ENCODE measurements at regions of chr1 and their contacts with region 1.

Region 1: DNA sequence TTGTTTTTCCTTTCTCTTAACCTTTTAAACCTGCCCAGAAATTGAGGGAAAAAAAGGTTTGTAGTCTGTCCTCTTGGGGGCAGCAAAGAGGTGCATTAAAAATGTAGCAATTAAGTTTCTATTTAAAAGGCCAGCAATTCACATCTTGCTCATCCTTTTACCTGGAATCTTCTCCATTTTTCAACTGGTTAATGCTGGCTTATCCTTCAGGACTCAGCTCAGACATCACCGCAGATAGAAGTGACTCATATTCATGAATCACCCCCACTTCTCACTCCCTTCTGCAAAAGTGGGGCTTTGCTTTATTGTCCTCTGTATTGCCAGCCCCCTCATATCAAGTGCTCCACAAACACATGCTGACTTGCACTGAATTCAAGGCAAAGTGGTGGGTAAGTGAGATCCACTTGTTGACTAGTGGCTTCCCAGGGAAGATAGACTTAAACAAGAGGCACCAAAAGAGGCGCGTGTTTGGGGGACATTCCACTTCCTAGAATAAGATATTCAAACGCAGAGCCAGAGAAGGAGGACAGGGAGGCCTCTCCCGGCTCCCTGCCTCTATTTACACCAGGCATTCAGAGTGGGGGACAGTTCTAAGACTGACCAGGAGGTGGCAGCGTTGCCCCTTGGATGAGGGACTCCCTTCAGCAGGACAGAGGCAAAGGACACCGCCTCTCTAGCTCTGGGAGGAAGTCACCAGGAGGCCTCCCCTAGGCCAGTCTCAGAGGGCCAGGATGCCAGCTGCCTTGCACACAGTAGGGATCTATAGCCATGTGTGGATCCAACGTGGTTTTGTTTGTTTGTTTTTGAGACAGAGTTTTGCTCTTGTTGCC is 23.2 kb upstream of the ZNF648 start:
- DNase-seq: no peak
- H3K4me3 ChIP-seq: no peak overlapping the region
- H3K27me3 ChIP-seq: no peaks in the 10 kb centered on the region
- CTCF ChIP-seq: peak; percentile 79

Region 2: GRCh38 chr1:181479137-181479745 is 605.5 kb before region 1 on chr1:
- CTCF ChIA-PET with region 1: interaction called, 58 read pairs
- POLR2A ChIA-PET with region 1: no interaction called
- DNase-seq: peak; percentile 4
- H3K4me3 ChIP-seq: no peak overlapping the region
- H3K27me3 ChIP-seq: peaks cover 26% of the 10 kb centered on the region
- CTCF ChIP-seq: peak; percentile 78

Region 3: GRCh38 chr1:182069028-182069466 is 15.7 kb before region 1 on chr1:
- CTCF ChIA-PET with region 1: interaction called, 36 read pairs
- POLR2A ChIA-PET with region 1: no interaction called
- DNase-seq: no peak
- H3K4me3 ChIP-seq: no peak overlapping the region
- H3K27me3 ChIP-seq: no peaks in the 10 kb centered on the region
- CTCF ChIP-seq: peak; percentile 84

Region 4: DNA sequence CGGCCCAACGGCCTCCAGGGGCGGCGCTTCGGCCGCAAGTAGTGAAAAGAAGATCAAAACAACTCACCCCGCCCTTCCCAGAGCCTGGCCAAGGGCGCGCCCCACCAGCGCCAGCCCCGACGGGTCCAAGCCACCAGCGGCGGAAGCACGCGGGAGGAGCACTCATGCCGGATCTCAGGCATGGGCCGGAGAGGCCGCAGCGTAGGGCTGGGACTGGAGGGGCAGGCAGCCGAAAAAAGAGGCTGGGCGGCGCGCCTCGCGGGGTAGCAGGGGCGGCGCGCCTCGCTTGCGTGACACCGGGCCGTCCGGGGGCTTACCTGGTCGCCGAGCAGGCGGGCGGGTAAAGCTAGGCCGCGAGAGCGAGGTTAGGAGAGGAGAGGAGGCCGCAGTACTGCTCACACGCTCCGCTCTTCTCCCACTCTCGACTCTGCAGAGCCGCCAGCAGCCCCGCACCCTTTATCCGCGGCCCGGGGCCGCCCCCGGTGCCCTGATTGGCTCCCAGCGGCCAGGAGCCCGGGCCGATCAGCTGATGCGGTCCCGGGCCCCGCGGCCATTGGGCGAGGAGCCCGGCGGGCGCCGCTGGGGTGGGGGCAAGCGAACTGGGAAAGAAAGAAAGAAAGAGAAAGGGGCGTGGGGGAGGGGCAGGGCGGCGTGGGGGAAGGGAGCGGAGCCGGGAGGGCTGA is 306.8 kb after region 1 on chr1 and contains the start of gene GLUL:
- CTCF ChIA-PET with region 1: interaction called, 61 read pairs
- POLR2A ChIA-PET with region 1: no interaction called
- DNase-seq: peak; percentile 63
- H3K4me3 ChIP-seq: peak within 1 kb of the TSS; percentile 84
- H3K27me3 ChIP-seq: no peaks in the 10 kb centered on the region
- CTCF ChIP-seq: 0 out of 2 replicates have a peak, but pooled peaks have one; percentile 29
- polyA plus RNA-seq, gene GLUL: 325 and 494 TPM in 2 replicates

Region 5: GRCh38 chr1:182397771-182398393 is 313.2 kb after region 1 on chr1:
- CTCF ChIA-PET with region 1: interaction called, 61 read pairs
- POLR2A ChIA-PET with region 1: no interaction called
- DNase-seq: no peak
- H3K4me3 ChIP-seq: no peak overlapping the region
- H3K27me3 ChIP-seq: no peaks in the 10 kb centered on the region
- CTCF ChIP-seq: no peak